ENCODE measurements at regions of chr16 and their contacts with region 1.

Region 1: GRCh38 chr16:84084570-84085270 is 32.0 kb downstream of the MBTPS1 start:
- DNase-seq: peak in 2 of 3 donors; percentile 52 to 78
- ATAC-seq: peak in 1 of 2 donors; percentile 24
- H3K4me3 ChIP-seq: no peak overlapping the region
- H3K27ac ChIP-seq: no peak overlapping the region
- H3K4me1 ChIP-seq: peaks cover 4% of the 10 kb centered on the region
- H3K27me3 ChIP-seq: no peaks in the 10 kb centered on the region

Region 2: GRCh38 chr16:83933885-83934683 is 150.6 kb before region 1 on chr16:
- intact Hi-C with region 1: no loop called
- DNase-seq: peak in 2 of 3 donors; percentile 36 to 55
- ATAC-seq: no peak
- H3K4me3 ChIP-seq: no peak overlapping the region
- H3K27ac ChIP-seq: no peak overlapping the region
- H3K4me1 ChIP-seq: no peaks in the 10 kb centered on the region
- H3K27me3 ChIP-seq: no peaks in the 10 kb centered on the region

Region 3: GRCh38 chr16:84175350-84176081 is 90.8 kb after region 1 on chr16:
- intact Hi-C with region 1: loop called in 1 of 4 experiments (anchors 10 kb)
- DNase-seq: peak; percentile 58 to 75 (median 70)
- ATAC-seq: peak; percentile 59 to 71
- H3K4me3 ChIP-seq: no peak overlapping the region
- H3K27ac ChIP-seq: peak overlapping the region; percentile 55
- H3K4me1 ChIP-seq: peaks cover 7% of the 10 kb centered on the region
- H3K27me3 ChIP-seq: no peaks in the 10 kb centered on the region

Region 4: DNA sequence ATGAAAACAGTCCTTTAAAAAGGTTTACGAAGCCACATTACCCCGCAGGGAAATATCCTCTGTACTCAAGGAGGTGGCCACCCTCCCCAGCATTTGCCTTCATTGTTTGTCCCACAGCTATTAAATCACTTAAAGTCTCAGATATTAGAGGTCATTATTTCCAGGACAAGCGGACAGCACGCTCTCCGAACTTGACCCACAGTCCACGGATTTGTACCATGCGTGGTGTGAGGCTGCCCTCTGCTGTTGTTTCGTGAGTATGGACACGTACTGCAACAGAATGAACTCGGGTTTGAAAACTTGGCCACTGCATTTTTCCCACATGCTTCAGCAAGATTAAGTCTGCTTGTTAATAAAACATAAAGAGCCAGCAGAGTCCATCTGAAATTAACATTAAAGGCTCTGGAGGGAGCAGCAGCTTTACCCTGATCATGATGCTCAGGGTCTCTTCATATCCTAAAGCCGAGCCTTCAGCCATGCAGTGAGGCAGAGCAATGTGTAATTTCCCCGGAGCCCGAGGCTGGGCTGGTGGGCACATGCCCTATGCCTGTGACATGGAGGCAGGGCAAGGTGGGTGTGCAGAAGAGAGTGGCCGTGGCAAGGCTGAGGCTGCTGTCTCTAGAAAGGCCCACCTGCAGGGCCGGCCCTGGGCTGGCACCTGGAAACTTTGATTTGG is 400.0 kb after region 1 on chr16:
- intact Hi-C with region 1: loop called in 1 of 4 experiments (anchors 10 kb)
- DNase-seq: peak; percentile 57 to 85 (median 83)
- ATAC-seq: peak; percentile 73 to 85
- H3K4me3 ChIP-seq: no peak overlapping the region
- H3K27ac ChIP-seq: no peak overlapping the region
- H3K4me1 ChIP-seq: no peaks in the 10 kb centered on the region
- H3K27me3 ChIP-seq: no peaks in the 10 kb centered on the region

Measured in right cardiac atrium (tissue), 5 donors.